ENCODE measurements at regions of chr3 and their contacts with region 1.

Region 1: GRCh38 chr3:126212602-126213378 is 32.4 kb upstream of the ALDH1L1 start:
- H3K4me3 ChIP-seq: peak overlapping the region; percentile 31
- H3K27ac ChIP-seq: no peak overlapping the region
- H3K4me1 ChIP-seq: peaks cover 2% of the 10 kb centered on the region; the same call in 1 of the 2 replicates
- CTCF ChIP-seq: no peak

Region 2: DNA sequence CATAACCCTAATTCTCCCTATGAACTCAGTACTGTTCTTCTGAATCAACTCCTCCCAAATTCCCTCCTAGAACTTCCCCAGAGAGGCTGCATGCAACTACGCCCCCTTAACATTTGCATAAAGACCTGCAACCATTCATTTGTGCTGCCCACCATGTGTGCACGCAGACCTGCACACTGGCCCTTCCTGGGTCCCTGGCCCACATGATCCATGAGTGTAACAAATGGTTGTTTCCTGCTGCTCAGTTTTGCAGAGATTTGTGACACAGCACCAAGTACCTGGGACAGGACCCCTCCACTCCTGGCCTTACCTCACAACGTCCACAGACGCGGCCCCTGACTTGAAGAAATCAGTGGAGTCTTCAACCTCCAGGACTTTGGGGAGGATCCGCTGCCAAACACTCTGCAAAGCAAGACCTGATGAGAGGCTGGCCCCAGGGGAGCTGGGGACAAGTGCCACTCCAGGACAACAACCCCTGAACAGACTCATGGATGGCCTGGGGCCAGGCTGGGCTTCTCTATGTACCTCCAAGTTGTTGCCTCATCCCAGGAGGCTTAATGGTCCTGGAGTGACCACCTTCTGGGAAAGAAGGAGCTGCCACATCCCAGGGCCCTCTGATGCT is 66.2 kb before region 1 on chr3:
- CTCF ChIA-PET with region 1: no interaction called
- POLR2A ChIA-PET with region 1: no interaction called
- H3K4me3 ChIP-seq: no peak overlapping the region
- H3K27ac ChIP-seq: no peak overlapping the region
- H3K4me1 ChIP-seq: no peaks in the 10 kb centered on the region
- CTCF ChIP-seq: no peak

Region 3: GRCh38 chr3:126197854-126198584 is 14.8 kb before region 1 on chr3:
- CTCF ChIA-PET with region 1: interaction called, 22 read pairs
- POLR2A ChIA-PET with region 1: interaction called, 4 read pairs
- H3K4me3 ChIP-seq: no peak overlapping the region
- H3K27ac ChIP-seq: no peak overlapping the region
- H3K4me1 ChIP-seq: no peaks in the 10 kb centered on the region
- CTCF ChIP-seq: no peak